ENCODE measurements at regions of chr13 and their contacts with region 1.

Region 1: DNA sequence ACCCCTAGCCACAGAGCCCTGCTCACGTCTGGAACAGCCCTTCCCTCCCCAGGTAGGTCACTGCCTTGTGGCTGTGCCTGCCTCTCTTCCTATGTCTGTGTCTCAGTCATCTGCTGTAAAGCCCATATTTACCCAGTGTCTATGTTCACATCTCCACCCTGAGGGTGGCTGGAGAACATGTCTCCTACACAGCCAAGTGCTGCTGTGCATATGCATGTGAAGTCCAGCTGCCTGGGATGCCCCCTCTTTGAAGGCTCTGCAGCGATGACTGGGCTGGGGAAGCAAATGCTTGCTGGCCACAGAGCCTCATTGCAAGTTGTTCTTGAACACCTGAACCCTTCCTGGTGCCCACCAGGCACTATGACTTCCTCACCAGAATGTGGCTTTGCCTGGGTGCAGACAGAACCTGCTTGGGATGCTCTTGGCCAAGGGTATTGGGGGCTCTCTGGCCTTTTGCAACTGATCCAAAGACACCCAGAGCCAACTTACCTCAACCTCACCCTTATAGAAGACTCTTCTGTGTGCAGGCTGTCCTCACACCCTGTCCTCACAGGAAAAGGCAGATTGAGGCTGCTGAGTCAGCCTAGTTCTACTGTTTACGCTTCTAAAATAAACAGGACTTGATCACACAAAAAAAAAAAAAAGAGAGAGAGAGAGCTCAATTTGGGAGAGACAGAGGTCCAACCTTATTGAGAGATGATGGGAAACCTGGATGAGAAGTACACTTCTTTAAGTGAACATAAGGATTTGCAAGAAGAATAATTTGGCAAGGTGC is 26.5 kb downstream of the MRPL57 start:
- DNase-seq: no peak
- H3K4me3 ChIP-seq: no peak overlapping the region
- H3K27ac ChIP-seq: peak overlapping the region; percentile 31
- H3K4me1 ChIP-seq: peaks cover 21% of the 10 kb centered on the region
- H3K27me3 ChIP-seq: no peaks in the 10 kb centered on the region
- CTCF ChIP-seq: no peak

Region 2: DNA sequence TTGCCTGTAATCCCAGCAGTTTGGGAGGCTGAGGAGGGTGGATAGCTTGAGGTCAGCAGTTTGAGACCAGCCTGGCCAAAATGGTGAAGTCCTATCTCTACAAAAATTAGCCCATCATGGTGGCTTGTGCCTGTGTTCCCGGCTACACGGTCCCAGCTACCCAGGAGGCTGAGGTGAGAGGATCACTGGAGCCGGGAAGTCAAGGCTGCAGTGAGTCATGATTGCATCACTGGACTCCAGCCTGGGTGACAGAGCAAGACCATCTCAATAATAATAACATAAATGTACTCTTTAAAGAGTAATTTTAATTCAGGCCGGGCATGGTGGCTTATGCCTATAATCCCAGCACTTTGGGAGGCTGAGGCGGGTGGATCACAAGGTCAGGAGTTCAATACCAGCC is 65.3 kb before region 1 on chr13:
- CTCF ChIA-PET with region 1: no interaction called
- POLR2A ChIA-PET with region 1: no interaction called
- intact Hi-C with region 1: no loop called
- DNase-seq: no peak
- H3K4me3 ChIP-seq: no peak overlapping the region
- H3K27ac ChIP-seq: no peak overlapping the region
- H3K4me1 ChIP-seq: peaks cover 4% of the 10 kb centered on the region
- H3K27me3 ChIP-seq: no peaks in the 10 kb centered on the region
- CTCF ChIP-seq: no peak

Region 3: GRCh38 chr13:21240586-21240985 is 37.6 kb after region 1 on chr13:
- CTCF ChIA-PET with region 1: no interaction called
- POLR2A ChIA-PET with region 1: no interaction called
- intact Hi-C with region 1: loop called (anchors 2 kb)
- DNase-seq: peak; percentile 96
- H3K4me3 ChIP-seq: no peak overlapping the region
- H3K27ac ChIP-seq: peak overlapping the region; percentile 84
- H3K4me1 ChIP-seq: peaks cover 34% of the 10 kb centered on the region
- H3K27me3 ChIP-seq: no peaks in the 10 kb centered on the region
- CTCF ChIP-seq: no peak

Region 4: GRCh38 chr13:21402586-21403228 is 199.8 kb after region 1 on chr13:
- CTCF ChIA-PET with region 1: no interaction called
- POLR2A ChIA-PET with region 1: no interaction called
- intact Hi-C with region 1: loop called (anchors 1 kb)
- DNase-seq: peak; percentile 23
- H3K4me3 ChIP-seq: no peak overlapping the region
- H3K27ac ChIP-seq: no peak overlapping the region
- H3K4me1 ChIP-seq: peaks cover 46% of the 10 kb centered on the region
- H3K27me3 ChIP-seq: no peaks in the 10 kb centered on the region
- CTCF ChIP-seq: no peak

Region 5: DNA sequence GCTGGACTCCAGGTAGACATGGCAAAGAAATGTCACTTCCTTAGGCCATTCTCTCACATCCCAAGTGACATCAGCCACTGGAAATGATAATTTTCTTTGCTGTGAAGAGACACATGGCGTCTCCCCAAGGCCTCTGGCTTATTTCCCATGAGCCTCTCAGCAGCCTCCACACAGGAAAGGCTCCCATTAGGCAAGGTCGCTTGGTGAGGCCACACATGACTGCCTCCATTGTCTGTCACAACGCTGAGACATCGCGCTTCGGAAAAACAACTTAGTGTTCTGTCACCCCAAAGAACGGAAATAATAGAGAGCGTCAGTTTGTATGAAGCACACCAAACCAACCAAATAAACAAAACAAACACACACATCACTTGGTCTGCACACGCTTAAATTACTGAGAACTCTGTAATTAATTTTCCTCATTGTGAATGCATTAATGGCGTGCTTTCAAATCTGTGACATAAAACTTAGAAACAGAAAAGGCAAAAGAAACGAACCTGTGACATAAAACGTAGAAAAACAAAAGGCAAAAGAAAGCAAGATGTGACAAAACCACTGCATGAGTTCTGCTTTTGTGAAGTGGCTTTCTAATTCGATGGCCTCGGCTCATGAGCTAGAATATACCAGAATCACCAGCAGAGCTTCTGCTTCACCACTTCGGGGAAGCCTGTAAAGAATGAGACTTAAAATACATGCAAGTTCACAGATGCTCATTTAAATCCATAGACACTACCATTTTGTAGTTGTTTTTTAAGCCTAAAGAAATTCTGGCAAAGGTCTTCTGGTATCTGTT is 1573.6 kb after region 1 on chr13:
- CTCF ChIA-PET with region 1: no interaction called
- POLR2A ChIA-PET with region 1: no interaction called
- intact Hi-C with region 1: loop called (anchors 5 kb)
- DNase-seq: peak; percentile 75
- H3K4me3 ChIP-seq: no peak overlapping the region
- H3K27ac ChIP-seq: peak overlapping the region; percentile 70
- H3K4me1 ChIP-seq: peaks cover 25% of the 10 kb centered on the region
- H3K27me3 ChIP-seq: no peaks in the 10 kb centered on the region
- CTCF ChIP-seq: no peak